H1 (cell line): ENCODE measurements at regions of chr1 and their contacts with region 1.

Region 1: DNA sequence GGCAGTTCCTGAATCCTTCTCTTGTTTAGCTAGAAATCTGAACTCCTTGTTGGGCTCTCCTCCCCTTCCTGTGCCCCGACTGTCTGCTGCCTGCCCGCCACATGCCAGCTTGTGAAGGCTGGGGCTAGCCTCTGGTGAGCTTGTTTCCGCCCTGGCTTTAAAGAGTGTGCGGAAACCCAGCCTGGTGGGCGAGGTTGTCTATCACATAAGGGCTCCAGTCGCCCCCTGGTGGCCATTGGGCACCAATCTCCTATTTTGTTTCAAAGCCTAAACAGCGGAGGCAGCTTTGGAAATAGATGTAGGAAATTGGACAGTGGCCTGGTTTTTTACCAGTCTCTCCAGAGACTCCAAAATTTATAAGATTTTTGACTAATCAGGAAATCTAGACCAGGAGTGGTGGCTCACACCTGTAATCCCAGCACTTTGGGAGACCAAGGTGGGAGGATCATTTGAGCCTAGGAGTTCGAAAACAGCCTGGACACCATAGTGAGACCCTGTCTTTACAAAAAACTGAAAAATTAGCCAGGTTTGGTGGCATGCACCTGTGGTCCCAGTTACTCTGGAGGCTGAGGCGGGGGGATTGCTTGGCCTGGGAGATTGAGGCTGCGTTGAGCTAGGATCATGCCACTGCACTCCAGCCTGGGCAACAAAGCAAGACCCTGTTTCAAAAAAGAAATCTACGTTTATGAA is 9.8 kb downstream of the ATP8B2 start:
- DNase-seq: peak in 1 of 2 experiments; percentile 90
- H3K4me3 ChIP-seq: no peak overlapping the region
- H3K27ac ChIP-seq: no peak overlapping the region
- H3K4me1 ChIP-seq: no peaks in the 10 kb centered on the region
- H3K27me3 ChIP-seq: no peaks in the 10 kb centered on the region
- CTCF ChIP-seq: peak; percentile 68 to 90 (median 89)
- EP300 ChIP-seq: no peak
- POLR2A ChIP-seq: no peak
- RAD21 ChIP-seq: peak; percentile 74 to 78

Region 2: DNA sequence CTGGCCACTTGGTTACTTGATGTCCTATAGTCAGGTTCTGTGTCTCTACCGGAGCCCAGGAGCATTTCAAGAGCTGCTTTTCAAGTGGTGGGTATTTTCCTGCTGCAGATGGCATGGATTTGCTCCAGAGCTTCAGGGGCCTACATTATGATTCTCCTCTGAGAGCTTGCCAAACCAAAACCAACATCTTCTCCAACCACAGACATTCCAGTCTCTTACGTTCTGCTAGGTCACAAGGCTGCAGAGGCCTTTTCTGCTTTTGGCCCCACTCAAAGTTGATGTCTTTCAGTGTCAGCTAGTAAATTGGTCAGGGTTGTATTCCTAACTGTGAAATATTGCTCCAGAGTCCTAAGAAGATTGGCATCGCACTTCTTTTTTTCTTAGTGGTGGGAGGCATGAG is 29.0 kb before region 1 on chr1:
- CTCF ChIA-PET with region 1: interaction called, 10 read pairs
- POLR2A ChIA-PET with region 1: no interaction called
- DNase-seq: no peak
- H3K4me3 ChIP-seq: no peak overlapping the region
- H3K27ac ChIP-seq: no peak overlapping the region
- H3K4me1 ChIP-seq: no peaks in the 10 kb centered on the region
- H3K27me3 ChIP-seq: no peaks in the 10 kb centered on the region
- CTCF ChIP-seq: no peak
- EP300 ChIP-seq: no peak
- POLR2A ChIP-seq: no peak
- RAD21 ChIP-seq: no peak

Region 3: DNA sequence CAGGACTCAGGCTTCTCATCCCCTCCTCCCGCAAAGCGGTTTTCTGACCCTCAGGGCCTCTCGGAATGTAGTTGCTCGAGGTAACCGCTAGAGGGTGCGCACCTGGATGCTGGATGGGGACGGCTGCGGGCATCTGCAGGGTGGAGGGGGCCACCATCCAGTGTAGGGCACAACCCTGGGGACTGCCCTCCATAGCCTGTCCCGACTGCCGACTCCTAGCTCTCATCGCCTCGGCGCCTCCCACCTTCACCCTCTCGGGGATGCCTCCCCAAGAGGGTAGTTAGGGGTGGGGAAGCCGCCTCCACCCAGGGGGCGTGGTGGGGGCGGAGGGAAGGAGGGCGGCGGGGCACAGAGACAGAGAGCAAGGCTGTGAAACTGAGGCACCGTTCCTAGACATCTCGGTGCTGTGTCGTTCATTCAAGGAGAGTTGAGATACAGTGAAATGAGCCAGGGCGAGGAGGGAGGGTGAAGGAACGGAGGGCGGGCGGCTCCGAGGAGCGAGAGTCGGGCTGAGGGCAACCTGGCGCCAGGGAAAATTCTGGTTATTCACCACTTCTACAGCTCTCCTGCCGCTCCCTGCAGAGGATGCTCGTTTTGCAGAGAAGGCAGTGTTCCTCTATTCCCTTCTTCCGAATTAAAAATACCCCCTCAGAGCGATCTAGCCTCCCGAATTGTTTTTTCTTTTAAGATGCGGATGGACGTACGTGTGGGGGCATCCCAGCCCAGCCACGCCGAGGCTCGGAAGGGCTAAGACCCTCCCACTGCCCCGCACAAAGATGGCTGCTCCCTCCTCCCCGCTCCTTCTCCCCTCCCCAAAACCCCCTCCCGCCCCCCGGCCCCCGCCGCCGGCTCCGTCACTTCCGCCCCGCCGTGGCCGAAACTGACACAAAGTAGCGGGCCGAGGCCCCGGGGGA is 10.2 kb before region 1 on chr1 and contains the start of gene ATP8B2:
- CTCF ChIA-PET with region 1: interaction called, 507 read pairs
- POLR2A ChIA-PET with region 1: interaction called, 7 read pairs
- DNase-seq: peak; percentile 54 to 93
- H3K4me3 ChIP-seq: peak within 1 kb of the TSS; percentile 66 to 89 (median 86)
- H3K27ac ChIP-seq: peak within 1 kb of the TSS; percentile 35; the same call in 1 of the 2 replicates
- H3K4me1 ChIP-seq: peaks cover 23 to 25% (median 23%) of the 10 kb centered on the region in 4 experiments
- H3K27me3 ChIP-seq: no peaks in the 10 kb centered on the region
- CTCF ChIP-seq: peak; percentile 86 to 92 (median 92)
- EP300 ChIP-seq: no peak
- POLR2A ChIP-seq: no peak
- RAD21 ChIP-seq: peak; percentile 43 to 51; a peak in 3 of 4 replicates
- total RNA-seq, gene ATP8B2: 59.3 and 61.4 TPM in 2 replicates

Region 4: DNA sequence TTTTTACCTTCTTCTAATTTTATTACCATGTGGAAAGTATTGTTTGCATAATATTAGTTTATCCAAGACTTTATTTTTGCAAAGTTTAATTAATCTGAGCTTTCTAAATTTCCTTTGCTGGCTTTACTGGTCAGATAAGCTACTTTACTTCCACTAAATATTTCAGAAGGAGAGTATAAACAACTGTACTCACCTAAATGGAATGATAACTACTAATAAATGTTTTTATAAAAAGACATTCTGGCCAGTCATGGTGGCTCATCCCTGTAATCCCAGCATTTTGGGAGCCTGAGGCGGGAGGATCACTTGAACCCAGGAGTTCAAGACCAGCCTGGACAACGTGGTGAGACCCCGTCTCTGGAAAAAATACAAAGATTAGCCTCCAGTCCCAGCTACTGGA is 26.2 kb after region 1 on chr1:
- CTCF ChIA-PET with region 1: interaction called, 507 read pairs
- POLR2A ChIA-PET with region 1: no interaction called
- DNase-seq: no peak
- H3K4me3 ChIP-seq: no peak overlapping the region
- H3K27ac ChIP-seq: no peak overlapping the region
- H3K4me1 ChIP-seq: peaks cover 0 to 3% (median 0%) of the 10 kb centered on the region in 4 experiments; a peak in 2 of 7 replicates
- H3K27me3 ChIP-seq: no peaks in the 10 kb centered on the region
- CTCF ChIP-seq: no peak
- EP300 ChIP-seq: no peak
- POLR2A ChIP-seq: no peak
- RAD21 ChIP-seq: no peak

Region 5: DNA sequence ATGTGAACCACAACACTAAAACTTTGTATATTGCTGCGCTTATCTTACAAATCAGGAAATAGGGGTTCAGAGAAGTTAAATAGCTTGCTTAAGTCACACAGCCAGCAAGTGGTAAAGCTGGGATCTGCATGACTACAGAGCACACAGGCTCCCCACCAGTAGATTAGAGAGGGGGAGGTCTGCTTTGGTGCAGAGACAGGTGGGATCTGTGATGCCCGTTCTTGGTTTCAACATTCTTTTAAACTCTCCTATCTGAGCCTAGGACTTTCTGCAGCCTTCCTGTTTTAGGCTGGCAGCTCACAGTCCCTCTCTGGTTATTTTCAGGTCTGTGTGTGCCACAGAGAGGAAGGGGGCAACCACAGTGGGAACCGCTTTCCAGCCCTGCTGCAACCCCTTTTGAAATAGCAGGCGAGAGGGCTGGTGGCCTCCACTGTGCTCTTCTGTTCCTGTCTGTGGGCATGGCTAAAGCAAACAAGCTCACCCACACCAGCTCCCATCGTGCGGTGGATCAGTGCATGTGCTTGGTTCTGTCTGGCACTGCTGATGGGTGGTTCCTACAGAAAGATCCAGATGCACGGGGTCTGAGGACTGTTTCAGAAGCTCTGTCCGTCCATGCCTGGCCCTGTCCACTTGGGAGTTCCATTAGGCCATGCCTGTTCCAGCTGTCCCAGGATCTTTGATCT is 68.2 kb after region 1 on chr1:
- CTCF ChIA-PET with region 1: no interaction called
- POLR2A ChIA-PET with region 1: no interaction called
- DNase-seq: no peak
- H3K4me3 ChIP-seq: no peak overlapping the region; a peak in 1 of 8 replicates
- H3K27ac ChIP-seq: no peak overlapping the region
- H3K4me1 ChIP-seq: peaks cover 0 to 8% (median 6%) of the 10 kb centered on the region in 4 experiments; a peak in 4 of 7 replicates
- H3K27me3 ChIP-seq: peaks cover 9 to 36% (median 26%) of the 10 kb centered on the region in 4 experiments
- CTCF ChIP-seq: no peak
- EP300 ChIP-seq: no peak
- POLR2A ChIP-seq: no peak
- RAD21 ChIP-seq: no peak